PC-9 (cell line): ENCODE measurements at regions of chr2 and their contacts with region 1.

Region 1: GRCh38 chr2:112275306-112275886 is at the start of gene ZC3H6:
- DNase-seq: peak; percentile 87 to 98
- H3K4me3 ChIP-seq: peak within 1 kb of the TSS; percentile 98
- H3K27ac ChIP-seq: peak within 1 kb of the TSS; percentile 99
- H3K4me1 ChIP-seq: peaks cover 7% of the 10 kb centered on the region; the same call in 1 of the 2 replicates
- H3K27me3 ChIP-seq: no peaks in the 10 kb centered on the region
- CTCF ChIP-seq: no peak
- total RNA-seq, gene ZC3H6: 9.1 and 10.0 TPM in 2 replicates

Region 2: GRCh38 chr2:112198780-112199179 is 76.6 kb before region 1 on chr2:
- CTCF ChIA-PET with region 1: no interaction called
- POLR2A ChIA-PET with region 1: no interaction called
- intact Hi-C with region 1: no loop called
- DNase-seq: no peak
- H3K4me3 ChIP-seq: no peak overlapping the region
- H3K27ac ChIP-seq: no peak overlapping the region
- H3K4me1 ChIP-seq: no peaks in the 10 kb centered on the region
- H3K27me3 ChIP-seq: no peaks in the 10 kb centered on the region
- CTCF ChIP-seq: no peak

Region 3: GRCh38 chr2:112481050-112481527 is 205.7 kb after region 1 on chr2:
- CTCF ChIA-PET with region 1: no interaction called
- POLR2A ChIA-PET with region 1: interaction called, 12 read pairs
- intact Hi-C with region 1: loop called (anchors 5 kb)
- DNase-seq: peak; percentile 74 to 77
- H3K4me3 ChIP-seq: peak overlapping the region; percentile 74
- H3K27ac ChIP-seq: peak overlapping the region; percentile 28; the same call in 1 of the 2 replicates
- H3K4me1 ChIP-seq: peaks cover 15% of the 10 kb centered on the region
- H3K27me3 ChIP-seq: no peaks in the 10 kb centered on the region
- CTCF ChIP-seq: peak; percentile 62